ENCODE measurements at regions of chr5 and their contacts with region 1.

Region 1: DNA sequence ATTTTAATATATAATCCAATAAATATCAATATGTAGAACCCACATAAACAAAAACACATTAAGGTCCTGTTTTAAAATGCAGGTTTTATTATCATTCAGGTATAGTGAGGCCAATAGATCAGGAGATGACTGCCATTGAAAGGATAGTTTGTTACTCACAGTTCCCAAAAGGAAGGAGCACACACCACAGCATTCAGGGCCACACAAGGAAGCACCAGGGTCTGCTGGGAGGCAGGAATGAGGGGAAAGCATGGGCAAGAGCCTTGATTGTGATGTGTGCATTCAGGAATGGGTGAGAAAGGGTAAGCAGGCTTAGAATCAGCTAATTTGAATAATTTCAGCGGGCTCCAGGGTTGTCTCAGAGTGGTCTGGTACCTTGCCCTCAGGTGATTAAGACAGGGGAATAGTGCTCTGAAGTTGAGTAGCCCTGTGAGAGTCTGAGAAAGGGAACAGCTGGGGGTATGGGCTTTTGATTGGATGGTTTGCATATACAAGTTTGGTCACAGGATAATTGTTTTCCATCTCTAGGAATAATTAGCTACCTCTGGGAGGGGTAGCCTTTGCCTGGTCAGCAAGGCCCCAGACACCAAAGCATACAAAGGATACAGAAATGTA is 19.8 kb upstream of the OTULIN start:
- DNase-seq: no peak
- H3K4me3 Mint-ChIP-seq: no peak overlapping the region
- H3K27ac Mint-ChIP-seq: no peak overlapping the region
- H3K4me1 Mint-ChIP-seq: peaks cover 7% of the 10 kb centered on the region
- H3K27me3 Mint-ChIP-seq: peaks cover 36% of the 10 kb centered on the region

Region 2: GRCh38 chr5:14277385-14278320 is 367.1 kb before region 1 on chr5:
- CTCF ChIA-PET with region 1: no interaction called
- POLR2A ChIA-PET with region 1: no interaction called
- DNase-seq: no peak
- H3K4me3 Mint-ChIP-seq: no peak overlapping the region
- H3K27ac Mint-ChIP-seq: no peak overlapping the region
- H3K4me1 Mint-ChIP-seq: peaks cover 10% of the 10 kb centered on the region
- H3K27me3 Mint-ChIP-seq: peaks cover 16% of the 10 kb centered on the region

Region 3: GRCh38 chr5:14351845-14352712 is 292.7 kb before region 1 on chr5:
- CTCF ChIA-PET with region 1: interaction called, 50 read pairs
- POLR2A ChIA-PET with region 1: interaction called, 5 read pairs
- DNase-seq: peak; percentile 68
- H3K4me3 Mint-ChIP-seq: no peak overlapping the region
- H3K27ac Mint-ChIP-seq: no peak overlapping the region
- H3K4me1 Mint-ChIP-seq: peaks cover 8% of the 10 kb centered on the region
- H3K27me3 Mint-ChIP-seq: peaks cover 5% of the 10 kb centered on the region

Region 4: DNA sequence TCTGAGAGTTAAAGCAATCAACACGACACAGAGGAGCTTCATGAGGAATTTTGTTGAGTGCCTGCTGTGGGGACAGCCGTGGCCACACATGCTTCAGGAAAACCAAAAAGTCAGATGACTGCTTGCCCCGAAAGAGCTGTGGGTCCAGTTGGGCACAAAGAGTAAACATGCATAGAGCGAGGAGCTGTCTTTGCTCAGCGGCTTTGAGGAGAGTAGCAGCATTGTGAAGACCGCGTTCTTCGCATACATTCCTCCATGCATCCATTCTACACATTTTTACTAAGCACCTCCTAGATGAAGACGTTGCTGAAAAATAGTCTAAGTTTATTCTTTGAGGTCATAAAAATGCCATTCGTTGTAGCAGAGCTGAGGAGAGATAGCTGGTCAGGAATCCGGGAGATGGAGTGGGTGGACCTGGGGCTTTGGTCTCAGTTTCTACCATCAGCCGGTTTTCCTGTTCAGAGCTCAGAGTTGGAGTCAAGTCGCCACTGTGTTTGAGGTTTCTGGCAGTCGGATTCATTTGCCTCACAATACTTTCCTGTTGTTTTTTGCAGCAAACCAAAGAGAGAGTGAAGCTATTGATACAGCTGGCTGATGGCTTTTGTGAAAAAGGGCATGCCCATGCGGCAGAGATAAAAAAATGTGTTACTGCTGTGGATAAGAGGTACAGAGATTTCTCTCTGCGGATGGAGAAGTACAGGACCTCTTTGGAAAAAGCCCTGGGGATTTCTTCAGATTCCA is 257.7 kb before region 1 on chr5:
- CTCF ChIA-PET with region 1: interaction called, 13 read pairs
- POLR2A ChIA-PET with region 1: no interaction called
- DNase-seq: no peak
- H3K4me3 Mint-ChIP-seq: no peak overlapping the region
- H3K27ac Mint-ChIP-seq: no peak overlapping the region
- H3K4me1 Mint-ChIP-seq: peaks cover 2% of the 10 kb centered on the region
- H3K27me3 Mint-ChIP-seq: peaks cover 17% of the 10 kb centered on the region

Region 5: DNA sequence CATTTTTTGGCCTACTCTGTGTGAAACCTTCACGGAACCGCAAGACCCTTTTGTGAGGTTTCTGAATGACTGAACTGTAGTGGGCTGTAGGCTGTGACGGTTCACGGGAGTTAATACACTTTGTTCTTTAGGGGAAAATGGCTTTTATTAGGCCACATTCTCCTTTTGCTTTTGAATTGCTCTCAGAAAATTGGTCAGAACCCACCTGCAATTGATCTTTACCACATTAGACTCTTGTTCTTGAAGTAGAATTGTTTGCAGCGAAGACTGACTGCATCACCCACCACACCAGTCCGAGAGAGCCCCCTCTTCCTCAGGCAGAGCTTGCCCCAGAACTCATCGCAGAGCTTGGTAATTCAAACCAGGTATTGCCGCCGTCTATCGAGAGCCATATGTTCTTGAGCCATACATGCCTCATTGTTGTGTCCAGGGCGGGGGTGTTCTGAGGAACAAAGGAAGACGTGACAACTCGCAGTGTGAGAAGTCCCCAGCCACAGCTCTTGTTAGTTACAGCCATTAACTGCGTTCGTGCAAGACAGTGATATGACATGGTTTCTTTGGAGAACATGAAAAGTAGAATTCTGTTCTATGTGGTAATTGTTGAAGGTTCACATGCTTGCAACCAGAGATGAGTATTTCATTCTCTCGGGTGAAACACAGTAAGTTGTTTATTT is 229.6 kb before region 1 on chr5:
- CTCF ChIA-PET with region 1: interaction called, 12 read pairs
- POLR2A ChIA-PET with region 1: interaction called, 5 read pairs
- DNase-seq: peak; percentile 24
- H3K4me3 Mint-ChIP-seq: peak overlapping the region; percentile 51
- H3K27ac Mint-ChIP-seq: peak overlapping the region; percentile 77
- H3K4me1 Mint-ChIP-seq: peaks cover 46% of the 10 kb centered on the region
- H3K27me3 Mint-ChIP-seq: peaks cover 10% of the 10 kb centered on the region

Region 6: GRCh38 chr5:14557203-14557770 is 87.4 kb before region 1 on chr5:
- CTCF ChIA-PET with region 1: no interaction called
- POLR2A ChIA-PET with region 1: no interaction called
- DNase-seq: no peak
- H3K4me3 Mint-ChIP-seq: no peak overlapping the region
- H3K27ac Mint-ChIP-seq: no peak overlapping the region
- H3K4me1 Mint-ChIP-seq: peaks cover 10% of the 10 kb centered on the region
- H3K27me3 Mint-ChIP-seq: no peaks in the 10 kb centered on the region

Region 7: DNA sequence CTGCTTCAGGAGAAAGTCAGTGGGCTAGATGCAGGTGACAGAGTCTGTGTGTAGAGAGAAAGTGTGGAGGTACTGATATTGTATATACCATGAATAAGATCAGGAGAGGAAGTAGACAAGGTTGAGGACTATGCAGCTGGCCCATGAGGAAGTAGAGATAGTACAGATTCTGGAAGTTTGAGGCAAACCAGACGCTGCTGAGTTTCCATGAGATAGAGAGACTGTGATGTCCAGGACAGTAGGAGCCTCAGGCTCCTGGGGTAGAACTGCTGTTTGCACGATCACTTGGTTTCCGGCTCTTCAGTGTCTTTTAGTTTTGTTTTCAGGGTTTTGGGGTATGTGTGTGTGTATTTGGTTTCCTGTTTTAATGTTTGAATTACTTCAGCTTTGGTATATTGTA is 49.5 kb before region 1 on chr5:
- CTCF ChIA-PET with region 1: interaction called, 17 read pairs
- POLR2A ChIA-PET with region 1: no interaction called
- DNase-seq: peak; percentile 56
- H3K4me3 Mint-ChIP-seq: peak overlapping the region; percentile 53
- H3K27ac Mint-ChIP-seq: peak overlapping the region; percentile 95
- H3K4me1 Mint-ChIP-seq: peaks cover 84% of the 10 kb centered on the region
- H3K27me3 Mint-ChIP-seq: no peaks in the 10 kb centered on the region

Region 8: DNA sequence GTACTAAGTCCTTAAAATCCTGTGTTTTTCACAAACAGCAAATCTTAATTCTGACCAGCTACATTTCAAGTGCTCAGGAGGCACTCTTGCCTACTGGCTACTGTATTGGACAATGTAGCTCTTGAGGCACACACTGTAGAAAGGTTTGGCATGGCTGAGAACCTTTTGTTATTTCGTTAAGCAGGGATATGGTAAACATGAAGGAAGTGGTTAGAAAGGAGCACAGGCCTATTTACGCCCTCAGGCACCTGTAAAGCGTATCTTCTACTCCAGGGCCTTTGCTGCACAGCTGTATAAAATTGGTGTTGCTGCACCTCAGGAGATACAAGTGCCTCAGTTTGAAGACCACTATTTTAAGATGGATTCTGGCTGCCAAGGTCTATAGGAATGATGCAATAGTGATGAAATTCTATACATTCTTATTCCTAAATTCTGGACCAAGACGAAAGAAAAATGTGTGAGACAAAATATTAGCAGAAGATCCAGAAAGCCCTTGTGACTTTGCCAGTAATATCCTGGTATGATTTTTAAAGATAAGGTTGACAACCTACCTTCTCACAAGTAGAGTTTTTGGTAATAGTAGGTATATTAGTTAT is 10.5 kb after region 1 on chr5:
- CTCF ChIA-PET with region 1: interaction called, 20 read pairs
- POLR2A ChIA-PET with region 1: no interaction called
- DNase-seq: no peak
- H3K4me3 Mint-ChIP-seq: no peak overlapping the region
- H3K27ac Mint-ChIP-seq: no peak overlapping the region
- H3K4me1 Mint-ChIP-seq: peaks cover 14% of the 10 kb centered on the region
- H3K27me3 Mint-ChIP-seq: peaks cover 21% of the 10 kb centered on the region

Measured in activated CD4-positive, alpha-beta memory T cell treated with anti-CD3 and anti-CD28 coated beads, Interleukin-2, amount 10 ng/mL, durations not matched to agents 7 days and 5 days (primary cell).